Heart right ventricle (tissue), 16 donors: ENCODE measurements at regions of chr1 and their contacts with region 1.

Region 1: GRCh38 chr1:195472291-195472690 is 1135.9 kb downstream of the KCNT2 start:
- DNase-seq: no peak
- ATAC-seq: no peak
- H3K4me3 ChIP-seq: no peak overlapping the region
- H3K27ac ChIP-seq: no peak overlapping the region
- H3K4me1 ChIP-seq: no peaks in the 10 kb centered on the region
- H3K27me3 ChIP-seq: no peaks in the 10 kb centered on the region
- CTCF ChIP-seq: no peak

Region 2: GRCh38 chr1:193558491-193559028 is 1913.7 kb before region 1 on chr1:
- intact Hi-C with region 1: loop called in 1 of 10 experiments (anchors 5 kb)
- DNase-seq: no peak
- ATAC-seq: peak in 7 of 8 donors; percentile 22 to 64 (median 39)
- H3K4me3 ChIP-seq: no peak overlapping the region
- H3K27ac ChIP-seq: no peak overlapping the region
- H3K4me1 ChIP-seq: peaks cover 0 to 13% (median 0%) of the 10 kb centered on the region in 9 donors
- H3K27me3 ChIP-seq: no peaks in the 10 kb centered on the region
- CTCF ChIP-seq: no peak

Region 3: GRCh38 chr1:195450794-195451193 is 21.5 kb before region 1 on chr1:
- intact Hi-C with region 1: no loop called
- DNase-seq: no peak
- ATAC-seq: no peak
- H3K4me3 ChIP-seq: no peak overlapping the region
- H3K27ac ChIP-seq: no peak overlapping the region
- H3K4me1 ChIP-seq: no peaks in the 10 kb centered on the region
- H3K27me3 ChIP-seq: no peaks in the 10 kb centered on the region
- CTCF ChIP-seq: no peak